AG04450 (cell line): ENCODE measurements at regions of chr20 and their contacts with region 1.

Region 1: DNA sequence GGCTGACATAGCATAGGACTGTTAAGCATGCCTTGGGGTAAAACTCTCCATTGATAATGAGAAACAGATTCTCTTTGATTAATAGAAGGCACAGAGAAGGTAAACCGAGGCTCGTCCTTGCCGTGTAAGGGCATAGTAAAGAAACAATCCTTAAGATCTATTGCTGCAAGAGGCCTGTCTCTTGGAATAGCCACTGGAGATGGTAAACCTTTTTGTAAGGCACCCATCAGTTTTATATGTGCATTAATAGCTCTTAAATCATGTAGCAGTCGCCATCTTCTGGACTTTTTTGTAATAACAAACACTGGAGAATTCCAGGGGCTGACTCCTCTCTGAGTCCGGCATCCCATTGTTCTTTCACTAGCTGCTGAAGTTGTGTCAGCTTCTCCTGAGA is 8.4 kb upstream of the ABHD12 start:
- DNase-seq: peak; percentile 59
- H3K4me3 ChIP-seq: no peak overlapping the region
- H3K27ac ChIP-seq: no peak overlapping the region
- H3K27me3 ChIP-seq: no peaks in the 10 kb centered on the region
- CTCF ChIP-seq: peak; percentile 68

Region 2: DNA sequence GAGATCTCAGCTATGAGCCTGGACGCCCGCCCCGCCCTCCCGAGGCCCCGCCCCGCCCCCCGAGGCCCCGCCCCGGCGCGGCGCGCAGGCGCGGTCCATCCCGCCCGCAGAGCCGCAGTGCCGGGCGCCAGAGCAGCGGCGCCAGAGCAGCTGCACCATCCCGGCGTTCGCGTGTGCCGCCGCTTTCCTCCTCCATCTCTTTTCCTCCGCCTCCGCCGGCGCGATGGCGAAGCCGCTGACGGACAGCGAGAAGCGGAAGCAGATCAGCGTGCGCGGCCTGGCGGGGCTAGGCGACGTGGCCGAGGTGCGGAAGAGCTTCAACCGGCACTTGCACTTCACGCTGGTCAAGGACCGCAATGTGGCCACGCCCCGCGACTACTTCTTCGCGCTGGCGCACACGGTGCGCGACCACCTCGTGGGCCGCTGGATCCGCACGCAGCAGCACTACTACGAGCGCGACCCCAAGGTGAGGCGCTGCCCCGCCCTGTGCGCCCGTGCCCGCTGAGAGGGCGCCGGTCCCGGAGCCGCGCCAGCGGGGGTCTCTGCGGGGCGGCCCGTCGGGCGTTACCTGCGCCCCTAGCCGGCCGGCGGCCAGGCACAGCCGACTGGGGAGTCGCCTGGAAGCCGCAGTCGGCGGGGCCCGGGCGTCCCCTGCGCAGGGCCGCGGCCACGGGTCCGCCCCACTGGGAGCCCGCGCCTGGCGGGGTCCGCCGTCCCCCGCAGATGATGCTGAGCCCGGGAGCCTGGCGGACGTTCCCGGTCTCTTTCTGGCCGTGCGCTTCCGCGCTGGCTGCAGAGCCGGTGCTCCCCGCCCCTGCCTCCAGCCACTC is 150.9 kb before region 1 on chr20 and contains the start of gene PYGB:
- CTCF ChIA-PET with region 1: interaction called, 11 read pairs
- POLR2A ChIA-PET with region 1: no interaction called
- DNase-seq: peak; percentile 56
- H3K4me3 ChIP-seq: peak within 1 kb of the TSS; percentile 89
- H3K27ac ChIP-seq: peak within 1 kb of the TSS; percentile 87
- H3K27me3 ChIP-seq: no peaks in the 10 kb centered on the region
- CTCF ChIP-seq: no peak
- polyA plus RNA-seq, gene PYGB: 43.2 and 60.0 TPM in 2 replicates

Region 3: GRCh38 chr20:25294459-25295385 is 104.3 kb before region 1 on chr20:
- CTCF ChIA-PET with region 1: interaction called, 93 read pairs
- POLR2A ChIA-PET with region 1: interaction called, 7 read pairs
- DNase-seq: no peak
- H3K4me3 ChIP-seq: no peak overlapping the region
- H3K27ac ChIP-seq: peak overlapping the region; percentile 39
- H3K27me3 ChIP-seq: no peaks in the 10 kb centered on the region
- CTCF ChIP-seq: peak; percentile 99

Region 4: GRCh38 chr20:25310268-25310920 is 88.6 kb before region 1 on chr20:
- CTCF ChIA-PET with region 1: interaction called, 42 read pairs
- POLR2A ChIA-PET with region 1: interaction called, 3 read pairs
- DNase-seq: peak; percentile 82
- H3K4me3 ChIP-seq: peak overlapping the region; percentile 51
- H3K27ac ChIP-seq: peak overlapping the region; percentile 98
- H3K27me3 ChIP-seq: no peaks in the 10 kb centered on the region
- CTCF ChIP-seq: peak; percentile 84